Heart left ventricle (tissue), 16 donors: ENCODE measurements at regions of chr5 and their contacts with region 1.

Region 1: GRCh38 chr5:83718195-83718825 is 2.3 kb downstream of the HAPLN1 start:
- DNase-seq: peak in 2 of 5 donors; percentile 18 to 26
- ATAC-seq: peak; percentile 23 to 70 (median 62)
- H3K4me3 ChIP-seq: peak overlapping the region in 3 of 12 donors; percentile 10 to 67 (median 52)
- H3K27ac ChIP-seq: peak overlapping the region in 2 of 12 donors; percentile 5 to 71
- H3K4me1 ChIP-seq: peaks cover 0 to 13% (median 1%) of the 10 kb centered on the region in 12 donors
- H3K27me3 ChIP-seq: peaks cover 0 to 36% (median 16%) of the 10 kb centered on the region in 9 donors
- CTCF ChIP-seq: peak; percentile 61 to 85 (median 78)
- POLR2A ChIP-seq: no peak

Region 2: GRCh38 chr5:83265318-83265717 is 453.0 kb before region 1 on chr5:
- intact Hi-C with region 1: no loop called
- DNase-seq: no peak
- ATAC-seq: no peak
- H3K4me3 ChIP-seq: no peak overlapping the region
- H3K27ac ChIP-seq: no peak overlapping the region
- H3K4me1 ChIP-seq: peaks cover 0 to 3% (median 0%) of the 10 kb centered on the region in 12 donors
- H3K27me3 ChIP-seq: no peaks in the 10 kb centered on the region
- CTCF ChIP-seq: no peak
- POLR2A ChIP-seq: no peak

Region 3: GRCh38 chr5:83509540-83509939 is 208.8 kb before region 1 on chr5:
- intact Hi-C with region 1: no loop called
- DNase-seq: peak in 4 of 5 donors; percentile 57 to 75 (median 66)
- ATAC-seq: peak in 3 of 4 donors; percentile 90 to 93 (median 91)
- H3K4me3 ChIP-seq: no peak overlapping the region
- H3K27ac ChIP-seq: peak overlapping the region in 7 of 12 donors; percentile 18 to 48 (median 27)
- H3K4me1 ChIP-seq: peaks cover 0 to 24% (median 11%) of the 10 kb centered on the region in 12 donors
- H3K27me3 ChIP-seq: no peaks in the 10 kb centered on the region
- CTCF ChIP-seq: no peak
- POLR2A ChIP-seq: no peak

Region 4: GRCh38 chr5:83864652-83865051 is 146.3 kb after region 1 on chr5:
- intact Hi-C with region 1: no loop called
- DNase-seq: no peak
- ATAC-seq: no peak
- H3K4me3 ChIP-seq: no peak overlapping the region
- H3K27ac ChIP-seq: no peak overlapping the region
- H3K4me1 ChIP-seq: no peaks in the 10 kb centered on the region
- H3K27me3 ChIP-seq: no peaks in the 10 kb centered on the region
- CTCF ChIP-seq: no peak
- POLR2A ChIP-seq: no peak

Region 5: GRCh38 chr5:83927140-83927733 is 208.9 kb after region 1 on chr5:
- intact Hi-C with region 1: loop called in 3 of 10 experiments (anchors 5 to 10 kb)
- DNase-seq: peak in 4 of 5 donors; percentile 14 to 47 (median 30)
- ATAC-seq: peak in 1 of 4 donors; percentile 56
- H3K4me3 ChIP-seq: no peak overlapping the region
- H3K27ac ChIP-seq: no peak overlapping the region
- H3K4me1 ChIP-seq: peaks cover 0 to 6% (median 0%) of the 10 kb centered on the region in 12 donors
- H3K27me3 ChIP-seq: no peaks in the 10 kb centered on the region
- CTCF ChIP-seq: peak; percentile 50 to 72 (median 62)
- POLR2A ChIP-seq: no peak

Region 6: GRCh38 chr5:84265130-84265529 is 546.8 kb after region 1 on chr5:
- intact Hi-C with region 1: loop called in 1 of 10 experiments (anchors 5 kb)
- DNase-seq: no peak
- ATAC-seq: no peak
- H3K4me3 ChIP-seq: no peak overlapping the region
- H3K27ac ChIP-seq: no peak overlapping the region
- H3K4me1 ChIP-seq: no peaks in the 10 kb centered on the region
- H3K27me3 ChIP-seq: no peaks in the 10 kb centered on the region
- CTCF ChIP-seq: no peak
- POLR2A ChIP-seq: no peak

Region 7: DNA sequence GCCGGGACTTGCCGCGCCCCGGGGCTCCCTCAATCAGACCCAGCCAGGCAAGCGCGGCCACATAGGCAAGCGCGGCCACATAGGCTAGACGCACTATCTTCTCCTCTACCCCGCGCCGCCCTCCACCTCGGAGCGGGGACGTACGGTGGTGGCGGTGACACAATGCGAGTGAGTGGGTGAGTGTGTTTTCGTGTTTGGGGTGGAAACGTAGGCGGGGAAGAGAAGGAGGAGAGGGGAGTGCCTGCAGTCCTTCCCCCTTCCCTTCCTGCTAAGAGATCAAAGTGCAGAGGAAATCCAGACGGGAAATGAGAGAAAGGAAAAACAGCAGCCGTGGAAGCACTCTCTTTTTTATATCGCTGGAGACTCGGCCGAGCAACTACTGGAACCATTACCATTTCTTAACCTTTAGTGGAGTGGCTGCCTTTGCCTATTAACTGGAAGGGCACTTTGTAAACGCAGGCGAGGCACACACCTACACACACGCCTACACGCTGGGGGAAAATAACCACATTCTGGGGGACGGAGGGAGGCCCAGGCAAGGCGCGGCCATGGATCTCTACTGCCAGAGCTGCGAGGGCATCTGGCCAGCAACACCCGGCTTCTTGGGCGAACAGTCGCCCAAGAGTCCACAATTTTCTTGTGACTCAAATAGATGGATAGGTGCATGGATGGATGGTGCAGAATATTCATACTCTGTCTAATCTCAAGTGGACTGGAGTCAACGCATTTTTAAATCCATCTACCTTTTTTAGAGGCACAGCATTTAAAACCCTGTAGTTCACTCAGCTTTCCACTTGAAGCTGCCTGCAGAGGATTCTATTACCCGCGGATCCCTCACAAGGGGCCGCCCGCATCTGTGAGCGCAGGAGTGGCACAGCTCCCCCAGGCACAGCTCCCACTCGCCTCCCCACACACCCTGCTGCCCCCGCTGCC is 664.3 kb after region 1 on chr5:
- intact Hi-C with region 1: loop called in 1 of 10 experiments (anchors 10 kb)
- DNase-seq: peak; percentile 20 to 70 (median 54)
- ATAC-seq: peak; percentile 43 to 72 (median 65)
- H3K4me3 ChIP-seq: peak overlapping the region; percentile 37 to 75 (median 58)
- H3K27ac ChIP-seq: peak overlapping the region; percentile 37 to 80 (median 60)
- H3K4me1 ChIP-seq: peaks cover 0 to 26% (median 0%) of the 10 kb centered on the region in 12 donors
- H3K27me3 ChIP-seq: peaks cover 0 to 47% (median 28%) of the 10 kb centered on the region in 9 donors
- CTCF ChIP-seq: no peak
- POLR2A ChIP-seq: no peak